ENCODE measurements at regions of chr9 and their contacts with region 1.

Region 1: DNA sequence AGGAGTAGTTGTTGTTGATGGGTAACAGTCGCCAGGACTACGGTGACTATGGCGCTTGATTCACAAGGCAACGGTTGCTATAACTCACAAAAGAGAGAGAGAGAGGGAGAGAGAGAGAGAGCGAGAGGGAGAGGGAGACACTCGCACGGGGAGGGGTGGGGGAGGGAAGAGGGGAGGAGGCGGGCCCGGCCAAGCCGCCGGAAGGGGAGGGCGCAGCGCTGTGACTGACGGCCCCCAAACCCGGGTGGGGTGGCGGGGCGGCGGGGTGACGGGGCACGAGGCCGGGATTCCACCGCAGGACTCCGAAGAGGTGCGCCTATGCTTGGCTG is at the start of gene RFX3:
- DNase-seq: peak; percentile 95
- ATAC-seq: peak; percentile 67
- H3K4me3 ChIP-seq: peak within 1 kb of the TSS; percentile 84 to 99 (median 95)
- H3K4me3 Mint-ChIP-seq: peak within 1 kb of the TSS; percentile 100
- H3K27ac ChIP-seq: peak within 1 kb of the TSS; percentile 100
- H3K27ac Mint-ChIP-seq: peak within 1 kb of the TSS; percentile 100
- H3K4me1 ChIP-seq: peaks cover 17 to 35% of the 10 kb centered on the region in 2 donors
- H3K4me1 Mint-ChIP-seq: peaks cover 48% of the 10 kb centered on the region
- H3K27me3 ChIP-seq: no peaks in the 10 kb centered on the region
- H3K27me3 Mint-ChIP-seq: no peaks in the 10 kb centered on the region
- CTCF ChIP-seq: no peak
- total RNA-seq, gene RFX3: 37.2 and 39.1 TPM in 2 replicates

Region 2: GRCh38 chr9:2857564-2858198 is 668.1 kb before region 1 on chr9:
- CTCF ChIA-PET with region 1: no interaction called
- POLR2A ChIA-PET with region 1: no interaction called
- intact Hi-C with region 1: no loop called
- DNase-seq: peak; percentile 71
- ATAC-seq: peak; percentile 73
- H3K4me3 ChIP-seq: no peak overlapping the region
- H3K4me3 Mint-ChIP-seq: no peak overlapping the region
- H3K27ac ChIP-seq: no peak overlapping the region
- H3K27ac Mint-ChIP-seq: no peak overlapping the region
- H3K4me1 ChIP-seq: no peaks in the 10 kb centered on the region
- H3K4me1 Mint-ChIP-seq: peaks cover 6% of the 10 kb centered on the region
- H3K27me3 ChIP-seq: peaks cover 0 to 3% (median 0%) of the 10 kb centered on the region in 4 experiments
- H3K27me3 Mint-ChIP-seq: peaks cover 35% of the 10 kb centered on the region
- CTCF ChIP-seq: peak; percentile 93

Region 3: GRCh38 chr9:3385871-3386270 is 139.9 kb before region 1 on chr9:
- CTCF ChIA-PET with region 1: no interaction called
- POLR2A ChIA-PET with region 1: no interaction called
- intact Hi-C with region 1: no loop called
- DNase-seq: no peak
- ATAC-seq: no peak
- H3K4me3 ChIP-seq: no peak overlapping the region
- H3K4me3 Mint-ChIP-seq: no peak overlapping the region
- H3K27ac ChIP-seq: no peak overlapping the region
- H3K27ac Mint-ChIP-seq: no peak overlapping the region
- H3K4me1 ChIP-seq: no peaks in the 10 kb centered on the region
- H3K4me1 Mint-ChIP-seq: peaks cover 16% of the 10 kb centered on the region
- H3K27me3 ChIP-seq: no peaks in the 10 kb centered on the region
- H3K27me3 Mint-ChIP-seq: no peaks in the 10 kb centered on the region
- CTCF ChIP-seq: no peak

Region 4: GRCh38 chr9:3398232-3398648 is 127.6 kb before region 1 on chr9:
- CTCF ChIA-PET with region 1: no interaction called
- POLR2A ChIA-PET with region 1: no interaction called
- intact Hi-C with region 1: loop called (anchors 2 kb)
- DNase-seq: peak; percentile 66
- ATAC-seq: peak; percentile 80
- H3K4me3 ChIP-seq: peak overlapping the region; percentile 5 to 62 (median 37)
- H3K4me3 Mint-ChIP-seq: peak overlapping the region; percentile 86
- H3K27ac ChIP-seq: peak overlapping the region; percentile 73 to 85
- H3K27ac Mint-ChIP-seq: peak overlapping the region; percentile 93
- H3K4me1 ChIP-seq: peaks cover 18% of the 10 kb centered on the region in 2 donors
- H3K4me1 Mint-ChIP-seq: peaks cover 32% of the 10 kb centered on the region
- H3K27me3 ChIP-seq: no peaks in the 10 kb centered on the region
- H3K27me3 Mint-ChIP-seq: no peaks in the 10 kb centered on the region
- CTCF ChIP-seq: no peak

Region 5: GRCh38 chr9:3473405-3473804 is 52.4 kb before region 1 on chr9:
- CTCF ChIA-PET with region 1: interaction called, 19 read pairs
- POLR2A ChIA-PET with region 1: interaction called, 26 read pairs
- intact Hi-C with region 1: loop called (anchors 1 kb)
- DNase-seq: peak; percentile 61
- ATAC-seq: peak; percentile 68
- H3K4me3 ChIP-seq: no peak overlapping the region
- H3K4me3 Mint-ChIP-seq: peak overlapping the region; percentile 9
- H3K27ac ChIP-seq: peak overlapping the region; percentile 32 to 77
- H3K27ac Mint-ChIP-seq: peak overlapping the region; percentile 83
- H3K4me1 ChIP-seq: peaks cover 40 to 44% of the 10 kb centered on the region in 2 donors
- H3K4me1 Mint-ChIP-seq: peaks cover 54% of the 10 kb centered on the region
- H3K27me3 ChIP-seq: no peaks in the 10 kb centered on the region
- H3K27me3 Mint-ChIP-seq: no peaks in the 10 kb centered on the region
- CTCF ChIP-seq: no peak

Region 6: DNA sequence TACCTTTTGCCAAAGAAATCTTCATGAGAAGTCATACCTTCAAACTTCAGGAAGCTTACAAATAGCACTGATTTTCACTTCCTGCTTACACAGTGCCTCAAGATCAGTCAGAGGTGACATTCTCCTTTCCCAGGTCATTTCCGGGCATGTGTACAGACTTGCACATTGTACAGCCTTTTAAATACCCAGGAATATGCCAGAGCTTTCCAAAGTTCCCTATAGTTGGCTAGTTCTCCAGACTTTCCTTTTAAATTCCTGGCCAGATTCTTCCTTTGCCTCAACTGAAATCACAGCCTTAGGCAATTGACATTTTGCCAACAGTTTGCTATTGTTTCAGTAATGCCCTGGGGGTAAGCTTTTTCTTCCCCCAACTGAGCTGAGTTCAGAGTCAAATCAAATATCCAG is 47.2 kb before region 1 on chr9:
- CTCF ChIA-PET with region 1: interaction called, 19 read pairs
- POLR2A ChIA-PET with region 1: interaction called, 26 read pairs
- intact Hi-C with region 1: loop called (anchors 1 kb)
- DNase-seq: peak; percentile 69
- ATAC-seq: peak; percentile 60
- H3K4me3 ChIP-seq: peak overlapping the region in 1 of 5 experiments; percentile 39
- H3K4me3 Mint-ChIP-seq: peak overlapping the region; percentile 62
- H3K27ac ChIP-seq: peak overlapping the region; percentile 61 to 63
- H3K27ac Mint-ChIP-seq: peak overlapping the region; percentile 86
- H3K4me1 ChIP-seq: peaks cover 52 to 57% of the 10 kb centered on the region in 2 donors
- H3K4me1 Mint-ChIP-seq: peaks cover 60% of the 10 kb centered on the region
- H3K27me3 ChIP-seq: no peaks in the 10 kb centered on the region
- H3K27me3 Mint-ChIP-seq: no peaks in the 10 kb centered on the region
- CTCF ChIP-seq: no peak

Region 7: GRCh38 chr9:3508521-3509291 is 17.1 kb before region 1 on chr9:
- CTCF ChIA-PET with region 1: interaction called, 3 read pairs
- POLR2A ChIA-PET with region 1: interaction called, 17 read pairs
- intact Hi-C with region 1: loop called (anchors 1 kb)
- DNase-seq: peak; percentile 30
- ATAC-seq: no peak
- H3K4me3 ChIP-seq: peak overlapping the region in 4 of 5 experiments; percentile 10 to 57 (median 41)
- H3K4me3 Mint-ChIP-seq: peak overlapping the region; percentile 57
- H3K27ac ChIP-seq: peak overlapping the region; percentile 21 to 61
- H3K27ac Mint-ChIP-seq: peak overlapping the region; percentile 13
- H3K4me1 ChIP-seq: peaks cover 9 to 15% of the 10 kb centered on the region in 2 donors
- H3K4me1 Mint-ChIP-seq: peaks cover 39% of the 10 kb centered on the region
- H3K27me3 ChIP-seq: no peaks in the 10 kb centered on the region
- H3K27me3 Mint-ChIP-seq: no peaks in the 10 kb centered on the region
- CTCF ChIP-seq: no peak

Measured in B cell (primary cell).